Common myeloid progenitor, CD34-positive (primary cell): ENCODE measurements at regions of chr5 and their contacts with region 1.

Region 1: DNA sequence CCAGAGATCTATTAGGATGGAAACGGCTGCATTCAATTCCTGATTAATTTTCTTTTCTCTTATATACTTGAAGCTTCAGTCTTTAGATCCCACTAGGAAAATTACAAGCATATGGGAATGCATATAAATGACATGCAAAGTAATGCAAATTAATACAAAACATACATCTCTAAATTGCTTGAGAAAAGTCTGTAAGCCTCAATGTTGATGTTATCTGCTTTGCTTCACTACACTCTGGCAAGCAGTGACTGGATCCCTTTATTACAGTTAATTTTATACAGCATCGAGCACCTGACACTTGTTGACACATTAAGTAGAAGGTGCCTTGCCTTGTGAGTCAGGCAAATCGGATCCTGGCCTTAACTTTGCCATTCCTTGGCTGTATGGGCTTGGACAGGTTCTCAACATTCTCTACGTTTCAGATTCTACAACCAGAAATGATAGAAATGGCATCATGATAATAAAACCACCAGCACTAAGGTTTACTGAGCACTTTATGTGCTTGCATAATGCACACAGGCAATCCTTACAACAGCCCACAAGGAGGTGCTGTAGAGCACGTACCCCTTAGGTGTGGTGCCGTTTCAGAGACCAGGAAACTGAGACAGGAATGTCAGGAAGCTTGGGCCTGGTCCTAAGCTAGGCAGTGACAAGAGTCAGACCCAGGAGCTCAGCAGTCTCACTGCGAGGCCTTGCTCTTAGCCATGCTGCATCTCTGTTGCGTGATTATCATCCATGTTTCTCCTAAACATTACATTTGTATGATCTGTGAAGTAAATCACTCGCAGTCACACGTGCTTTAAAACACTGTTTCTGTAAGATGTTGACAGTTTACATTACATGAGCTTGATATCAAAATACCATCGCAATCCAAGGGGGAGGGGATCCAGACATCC is 2.7 kb downstream of the GCNT4 start:
- DNase-seq: peak; percentile 69 to 79 (median 75)
- H3K4me3 ChIP-seq: peak overlapping the region in 1 of 7 experiments; percentile 3
- H3K27ac ChIP-seq: no peak overlapping the region
- H3K4me1 ChIP-seq: peaks cover 0 to 37% (median 28%) of the 10 kb centered on the region in 4 experiments
- H3K27me3 ChIP-seq: peaks cover 0 to 4% (median 0%) of the 10 kb centered on the region in 5 experiments

Region 2: DNA sequence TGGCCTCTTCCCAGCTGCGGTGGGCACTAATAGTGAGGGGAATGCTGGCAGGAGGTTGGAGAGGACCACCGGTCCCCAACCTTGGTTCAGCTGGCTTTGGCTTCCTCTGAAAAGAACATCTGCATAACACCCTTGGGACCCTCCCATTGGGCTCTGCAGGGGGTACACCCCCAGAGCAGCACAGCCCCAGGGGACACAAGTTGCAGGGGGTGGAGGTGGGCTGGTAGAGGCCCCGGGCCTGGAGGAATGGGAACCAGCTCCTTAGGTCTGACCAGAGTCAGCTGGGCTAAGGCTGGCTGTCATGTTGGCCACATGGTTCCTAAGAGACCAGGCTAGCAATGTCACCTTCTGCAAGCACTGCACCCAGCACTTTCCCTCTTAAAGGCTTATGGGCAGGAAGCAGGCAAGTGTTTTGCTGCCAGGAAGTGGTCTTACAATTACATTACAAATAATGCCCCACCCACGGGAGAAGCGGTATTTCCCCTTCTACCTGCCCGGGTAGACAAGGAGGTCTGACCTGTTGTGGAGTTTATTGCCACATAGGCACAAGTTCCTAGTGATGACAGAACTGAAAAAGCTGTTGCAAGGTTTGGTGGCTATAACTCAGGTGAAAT is 15.5 kb before region 1 on chr5:
- CTCF ChIA-PET with region 1: interaction called, 17 read pairs
- POLR2A ChIA-PET with region 1: no interaction called
- DNase-seq: peak in 2 of 3 donors; percentile 26 to 37
- H3K4me3 ChIP-seq: no peak overlapping the region
- H3K27ac ChIP-seq: no peak overlapping the region
- H3K4me1 ChIP-seq: peaks cover 0 to 8% (median 6%) of the 10 kb centered on the region in 4 experiments
- H3K27me3 ChIP-seq: no peaks in the 10 kb centered on the region

Region 3: GRCh38 chr5:75236322-75237316 is 186.9 kb after region 1 on chr5 and contains the start of gene ANKRD31:
- CTCF ChIA-PET with region 1: interaction called, 20 read pairs
- POLR2A ChIA-PET with region 1: no interaction called
- DNase-seq: peak; percentile 86 to 92 (median 90)
- H3K4me3 ChIP-seq: peak within 1 kb of the TSS; percentile 67 to 95 (median 77)
- H3K27ac ChIP-seq: peak within 1 kb of the TSS in 1 of 2 experiments; percentile 64
- H3K4me1 ChIP-seq: peaks cover 0 to 12% (median 7%) of the 10 kb centered on the region in 4 experiments
- H3K27me3 ChIP-seq: no peaks in the 10 kb centered on the region

Region 4: DNA sequence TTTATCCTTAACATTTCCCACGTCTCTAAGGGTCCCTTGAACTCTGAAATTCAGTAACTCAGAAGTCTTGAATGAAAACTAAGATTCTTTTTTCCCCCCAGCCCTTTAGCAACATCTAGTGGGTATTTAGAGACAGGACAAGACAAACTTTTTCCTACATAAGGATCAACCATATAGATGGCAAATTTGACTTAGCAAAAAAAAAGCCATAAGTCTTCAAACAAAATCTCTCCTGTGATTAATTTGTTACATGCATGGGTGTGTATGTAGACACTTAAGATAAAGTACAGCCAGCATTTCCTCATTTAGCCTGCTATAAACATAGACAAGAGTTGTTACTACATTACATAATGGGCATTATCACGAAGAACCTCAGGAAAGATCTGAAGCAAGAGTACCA is 216.0 kb after region 1 on chr5:
- CTCF ChIA-PET with region 1: interaction called, 13 read pairs
- POLR2A ChIA-PET with region 1: no interaction called
- DNase-seq: peak; percentile 57 to 84 (median 73)
- H3K4me3 ChIP-seq: no peak overlapping the region
- H3K27ac ChIP-seq: no peak overlapping the region
- H3K4me1 ChIP-seq: no peaks in the 10 kb centered on the region
- H3K27me3 ChIP-seq: no peaks in the 10 kb centered on the region